ENCODE measurements at regions of chr16 and their contacts with region 1.

Region 1: GRCh38 chr16:90022209-90023064 is 3.2 kb upstream of the DBNDD1 start:
- DNase-seq: peak; percentile 97
- H3K4me3 Mint-ChIP-seq: peak overlapping the region; percentile 82
- H3K27ac Mint-ChIP-seq: peak overlapping the region; percentile 86
- H3K4me1 Mint-ChIP-seq: peaks cover 22% of the 10 kb centered on the region
- H3K27me3 Mint-ChIP-seq: peaks cover 16% of the 10 kb centered on the region

Region 2: DNA sequence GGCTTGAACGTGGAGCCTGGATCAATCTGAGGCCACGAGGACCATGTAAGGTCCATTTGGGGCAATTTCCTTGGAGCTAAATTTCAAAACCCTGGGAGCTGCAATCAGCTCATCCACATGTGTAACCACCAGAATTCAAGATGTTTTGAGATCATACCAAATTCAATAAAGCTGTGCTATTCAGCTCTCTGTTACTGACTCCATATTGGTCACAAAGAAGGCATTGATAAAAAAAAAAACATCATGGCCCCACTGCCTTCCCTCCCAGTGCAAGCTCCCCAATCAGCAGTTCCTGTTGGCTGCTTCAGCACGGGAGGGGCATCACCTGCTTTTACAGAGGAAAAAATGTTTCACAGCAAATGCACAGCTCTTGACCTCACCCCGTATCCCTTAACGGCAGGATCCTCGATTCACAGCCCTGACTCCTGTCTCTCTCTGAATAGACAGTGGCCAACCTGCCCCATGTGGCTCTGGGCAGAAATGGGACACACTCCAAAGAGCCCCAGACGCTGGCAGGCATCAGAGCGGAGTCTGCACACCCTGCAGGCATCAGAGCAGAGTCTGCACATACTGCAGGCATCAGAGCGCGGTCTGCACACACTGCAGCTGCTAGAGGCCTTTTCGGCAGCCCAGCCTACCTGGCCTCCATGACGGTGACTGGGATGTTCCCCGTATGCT is 243.1 kb before region 1 on chr16:
- intact Hi-C with region 1: no loop called
- DNase-seq: no peak
- H3K4me3 Mint-ChIP-seq: no peak overlapping the region
- H3K27ac Mint-ChIP-seq: no peak overlapping the region
- H3K4me1 Mint-ChIP-seq: peaks cover under 1% of the 10 kb centered on the region
- H3K27me3 Mint-ChIP-seq: no peaks in the 10 kb centered on the region

Region 3: DNA sequence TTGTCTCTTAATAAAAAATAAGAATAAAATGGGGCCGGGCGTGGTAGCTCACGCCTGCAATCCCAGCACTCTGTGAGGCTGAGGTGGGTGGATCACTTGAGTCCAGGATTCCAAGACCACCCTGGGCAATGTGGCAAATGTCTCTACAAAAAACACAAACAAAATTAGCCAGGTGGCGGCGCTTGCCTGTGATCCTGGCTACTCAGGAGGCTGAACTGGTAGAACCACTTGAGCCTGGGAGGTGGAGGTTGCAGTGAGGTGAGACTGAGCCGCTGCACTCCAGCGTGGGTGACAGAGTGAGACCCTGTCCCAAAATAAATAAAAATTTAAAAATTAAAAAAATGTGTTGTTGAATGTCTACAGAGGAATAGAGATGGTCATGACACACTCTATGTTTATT is 76.8 kb before region 1 on chr16:
- intact Hi-C with region 1: loop called (anchors 5 kb)
- DNase-seq: no peak
- H3K4me3 Mint-ChIP-seq: no peak overlapping the region
- H3K27ac Mint-ChIP-seq: no peak overlapping the region
- H3K4me1 Mint-ChIP-seq: peaks cover 7% of the 10 kb centered on the region
- H3K27me3 Mint-ChIP-seq: peaks cover 35% of the 10 kb centered on the region

Region 4: GRCh38 chr16:89972244-89973234 is 49.9 kb before region 1 on chr16:
- intact Hi-C with region 1: loop called (anchors 2 kb)
- DNase-seq: peak; percentile 98
- H3K4me3 Mint-ChIP-seq: peak overlapping the region; percentile 100
- H3K27ac Mint-ChIP-seq: peak overlapping the region; percentile 97
- H3K4me1 Mint-ChIP-seq: peaks cover 18% of the 10 kb centered on the region
- H3K27me3 Mint-ChIP-seq: peaks cover 2% of the 10 kb centered on the region

Region 5: GRCh38 chr16:90070440-90070839 is 48.0 kb after region 1 on chr16:
- intact Hi-C with region 1: no loop called
- DNase-seq: no peak
- H3K4me3 Mint-ChIP-seq: no peak overlapping the region
- H3K27ac Mint-ChIP-seq: no peak overlapping the region
- H3K4me1 Mint-ChIP-seq: no peaks in the 10 kb centered on the region
- H3K27me3 Mint-ChIP-seq: peaks cover 20% of the 10 kb centered on the region

Measured in activated CD4-positive, alpha-beta T cell treated with anti-CD3 and anti-CD28 coated beads, Interleukin-2, amount 10 ng/mL, durations not matched to agents 24 days and 14 days (primary cell).